ENCODE measurements at regions of chr1 and their contacts with region 1.

Region 1: DNA sequence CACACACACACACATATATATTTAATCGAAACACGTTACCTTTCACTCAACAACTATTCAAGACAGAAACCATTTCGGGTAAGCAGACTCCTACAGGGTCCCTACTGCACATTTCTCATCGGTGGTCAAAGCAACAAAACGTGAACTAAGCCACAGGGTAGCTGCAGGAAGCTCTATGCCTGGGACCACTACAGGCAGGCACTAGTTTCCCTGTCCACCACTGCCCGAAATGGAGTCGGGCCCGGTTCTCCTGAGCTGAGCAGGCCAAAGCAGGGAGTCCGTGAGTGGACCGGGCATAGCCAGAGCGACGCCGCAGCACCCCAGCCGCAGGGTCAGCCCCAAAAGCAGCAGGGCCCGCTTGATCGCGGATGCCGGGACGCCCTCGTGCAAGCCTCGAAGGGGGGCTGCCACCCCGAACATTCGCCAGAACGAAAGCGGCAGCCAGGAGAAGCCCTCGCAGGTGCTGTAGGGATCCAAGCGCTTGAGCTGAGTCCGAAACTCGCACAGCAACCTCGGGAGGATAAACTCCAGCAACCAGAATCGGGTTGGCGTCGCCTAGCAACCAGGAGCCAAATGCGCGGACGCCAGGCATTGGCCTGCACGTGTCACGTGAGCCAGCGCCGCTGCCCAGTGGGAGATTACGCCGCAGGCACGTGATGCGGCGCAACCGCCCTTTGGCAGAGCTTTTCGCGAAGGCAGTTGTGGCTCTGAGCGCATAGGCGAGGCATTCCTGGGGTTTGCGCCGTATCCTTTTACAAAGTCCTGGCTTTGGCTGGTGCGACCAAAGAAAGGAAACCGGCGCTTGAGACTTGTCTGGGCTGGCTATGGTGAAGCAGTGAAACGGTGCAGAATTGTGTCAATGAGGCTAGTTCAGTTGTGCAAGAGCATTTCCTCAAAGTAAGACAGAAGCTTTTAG is 13.9 kb upstream of the DDI2 start:
- DNase-seq: peak; percentile 92
- ATAC-seq: peak; percentile 97
- H3K4me3 ChIP-seq: peak overlapping the region; percentile 50
- H3K27ac ChIP-seq: peak overlapping the region; percentile 36
- H3K4me1 ChIP-seq: no peaks in the 10 kb centered on the region
- H3K27me3 ChIP-seq: no peaks in the 10 kb centered on the region
- CTCF ChIP-seq: no peak
- POLR2A ChIP-seq: no peak
- RAD21 ChIP-seq: no peak

Region 2: DNA sequence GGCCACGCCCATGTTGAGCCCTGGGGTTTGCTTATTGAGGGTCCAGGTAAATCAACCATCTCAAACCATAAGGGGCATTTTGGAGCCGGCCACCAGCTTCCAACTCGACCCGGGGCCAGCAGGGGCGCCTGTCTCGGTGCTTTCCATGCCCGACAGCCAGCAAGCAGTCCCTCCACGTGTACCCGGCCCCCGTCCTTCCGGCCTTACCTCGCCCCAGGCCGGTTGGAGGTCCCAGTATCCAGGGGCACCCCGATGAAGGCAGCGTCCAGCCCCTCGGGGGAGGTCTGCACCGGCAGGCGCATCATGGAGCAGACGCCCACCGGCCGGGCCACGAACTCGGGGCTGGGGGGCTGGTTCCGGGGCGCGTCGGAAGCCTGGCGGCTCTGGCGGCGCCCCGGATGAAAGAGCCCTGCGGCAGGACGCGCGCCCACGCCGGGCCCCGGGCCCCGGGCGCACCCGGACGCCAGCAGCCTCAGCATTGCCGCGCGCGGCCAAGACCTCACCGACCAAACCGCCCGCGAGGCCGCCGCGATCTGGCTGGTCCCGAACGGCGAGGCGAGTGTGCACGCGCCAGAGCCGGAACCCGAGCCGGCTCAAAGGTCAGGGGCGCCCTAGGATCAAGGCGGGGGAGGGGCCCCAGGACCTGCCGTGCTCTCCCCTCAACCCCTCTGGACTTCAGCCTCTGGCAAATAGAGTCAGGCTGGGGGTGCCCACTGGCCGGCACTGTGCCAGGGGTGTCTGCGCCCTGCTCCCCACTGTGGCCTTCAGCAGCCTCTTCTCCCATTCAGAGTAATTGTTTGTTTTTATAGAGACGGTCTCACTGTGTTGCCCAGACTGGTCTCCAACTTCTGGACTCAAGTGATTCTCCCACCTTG is 18.6 kb before region 1 on chr1 and contains the start of gene AGMAT:
- CTCF ChIA-PET with region 1: no interaction called
- POLR2A ChIA-PET with region 1: interaction called, 14 read pairs
- dilution Hi-C with region 1: no loop called
- in situ Hi-C with region 1: no loop called
- intact Hi-C with region 1: no loop called
- DNase-seq: no peak
- ATAC-seq: peak; percentile 69
- H3K4me3 ChIP-seq: peak within 1 kb of the TSS; percentile 4; the same call in 1 of the 2 replicates
- H3K27ac ChIP-seq: no peak within 1 kb of the TSS
- H3K4me1 ChIP-seq: no peaks in the 10 kb centered on the region
- H3K27me3 ChIP-seq: no peaks in the 10 kb centered on the region; the same call in 1 of the 2 replicates
- CTCF ChIP-seq: 0 out of 2 replicates have a peak, but pooled peaks have one; percentile 19
- POLR2A ChIP-seq: no peak
- RAD21 ChIP-seq: no peak
- total RNA-seq, gene AGMAT: 0.18 and 0.28 TPM in 2 replicates

Region 3: DNA sequence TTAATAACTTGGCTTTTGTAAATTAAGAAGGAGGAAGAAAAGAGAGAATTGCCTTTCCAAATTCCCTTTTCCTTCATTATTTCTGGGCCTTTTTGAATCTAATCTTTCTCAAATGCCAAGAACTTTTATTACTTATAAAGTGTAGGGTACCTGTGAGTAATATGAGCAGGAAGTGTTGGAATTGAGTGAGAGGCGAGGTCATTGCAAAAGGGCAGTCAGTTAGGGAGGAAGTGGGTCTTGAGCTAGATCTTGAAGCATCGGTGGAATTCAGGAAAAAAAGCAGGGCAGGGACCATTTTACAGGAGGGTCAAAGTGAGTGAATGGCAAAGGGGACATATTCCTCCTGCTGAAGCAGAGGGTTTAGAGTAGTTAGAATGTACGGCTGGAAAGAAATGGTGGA is 37.4 kb after region 1 on chr1:
- CTCF ChIA-PET with region 1: no interaction called
- POLR2A ChIA-PET with region 1: no interaction called
- dilution Hi-C with region 1: no loop called
- in situ Hi-C with region 1: no loop called
- intact Hi-C with region 1: no loop called
- DNase-seq: no peak
- ATAC-seq: no peak
- H3K4me3 ChIP-seq: no peak overlapping the region
- H3K27ac ChIP-seq: no peak overlapping the region
- H3K4me1 ChIP-seq: no peaks in the 10 kb centered on the region
- H3K27me3 ChIP-seq: no peaks in the 10 kb centered on the region
- CTCF ChIP-seq: no peak
- POLR2A ChIP-seq: no peak
- RAD21 ChIP-seq: no peak

Region 4: DNA sequence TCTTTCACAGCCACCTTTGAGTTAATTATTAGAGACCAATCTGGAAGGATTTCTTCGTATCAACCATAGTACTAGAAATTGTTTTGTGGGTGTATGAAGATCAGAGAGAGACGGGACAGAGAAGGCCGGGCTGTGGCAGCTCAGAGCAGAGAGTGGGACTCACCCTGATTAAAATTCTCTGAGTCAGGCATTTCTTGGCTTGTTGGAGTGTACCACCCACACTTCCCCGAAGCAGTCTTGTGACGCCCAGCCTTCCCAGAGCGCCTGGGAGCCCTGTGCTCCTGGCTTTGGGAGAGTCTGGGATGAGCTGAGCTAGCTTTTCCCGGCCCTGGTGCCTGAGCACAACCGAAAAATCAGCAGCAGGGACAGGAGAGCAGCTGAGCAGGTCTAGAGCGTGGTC is 100.3 kb after region 1 on chr1:
- CTCF ChIA-PET with region 1: no interaction called
- POLR2A ChIA-PET with region 1: no interaction called
- dilution Hi-C with region 1: no loop called
- in situ Hi-C with region 1: no loop called
- intact Hi-C with region 1: loop called (anchors 5 kb)
- DNase-seq: peak; percentile 91
- ATAC-seq: peak; percentile 97
- H3K4me3 ChIP-seq: no peak overlapping the region
- H3K27ac ChIP-seq: peak overlapping the region; percentile 76
- H3K4me1 ChIP-seq: peaks cover 16% of the 10 kb centered on the region; the same call in 1 of the 2 replicates
- H3K27me3 ChIP-seq: no peaks in the 10 kb centered on the region
- CTCF ChIP-seq: no peak
- POLR2A ChIP-seq: peak; percentile 38; the same call in 1 of the 2 replicates
- RAD21 ChIP-seq: peak; percentile 2; the same call in 1 of the 2 replicates

Region 5: GRCh38 chr1:15724923-15725880 is 121.9 kb after region 1 on chr1:
- CTCF ChIA-PET with region 1: no interaction called
- POLR2A ChIA-PET with region 1: no interaction called
- dilution Hi-C with region 1: no loop called
- in situ Hi-C with region 1: no loop called
- intact Hi-C with region 1: no loop called
- DNase-seq: no peak
- ATAC-seq: no peak
- H3K4me3 ChIP-seq: no peak overlapping the region
- H3K27ac ChIP-seq: no peak overlapping the region
- H3K4me1 ChIP-seq: no peaks in the 10 kb centered on the region
- H3K27me3 ChIP-seq: no peaks in the 10 kb centered on the region
- CTCF ChIP-seq: no peak
- POLR2A ChIP-seq: no peak
- RAD21 ChIP-seq: no peak

Region 6: DNA sequence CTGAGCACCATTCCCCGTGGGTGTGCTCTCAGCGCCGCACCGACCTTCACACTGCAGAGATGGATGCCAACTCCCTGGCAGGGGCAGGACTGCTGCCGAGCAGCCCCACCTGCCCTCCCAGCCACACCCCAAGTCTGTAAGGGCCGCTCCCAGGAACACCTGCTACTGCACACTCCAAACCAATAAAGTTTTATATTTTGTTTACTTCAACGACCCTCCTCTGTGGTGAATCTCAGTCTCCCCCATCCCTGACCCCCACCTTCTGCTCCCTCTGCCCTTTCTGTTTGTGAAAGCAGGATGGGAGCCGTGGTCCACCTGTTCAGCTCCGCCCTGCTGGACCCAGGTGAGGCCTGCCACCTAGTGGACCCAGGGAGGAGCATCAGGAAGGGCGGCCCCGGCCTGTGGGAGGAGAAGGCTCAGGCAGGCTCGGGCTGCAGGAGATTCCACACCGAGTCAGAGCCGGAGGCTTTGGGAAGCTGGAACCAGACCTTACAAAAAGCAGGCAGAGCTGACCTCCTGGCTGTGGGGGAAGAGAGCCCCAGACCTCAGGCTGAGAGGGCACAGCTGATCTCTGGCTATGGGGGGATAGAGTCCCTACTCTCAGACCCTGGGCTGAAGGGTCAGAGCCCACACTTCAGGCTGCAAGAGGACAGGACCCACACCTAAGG is 138.0 kb after region 1 on chr1:
- CTCF ChIA-PET with region 1: no interaction called
- POLR2A ChIA-PET with region 1: no interaction called
- dilution Hi-C with region 1: no loop called
- in situ Hi-C with region 1: loop called (anchors 5 kb)
- intact Hi-C with region 1: no loop called
- DNase-seq: peak; percentile 44
- ATAC-seq: peak; percentile 87
- H3K4me3 ChIP-seq: no peak overlapping the region
- H3K27ac ChIP-seq: no peak overlapping the region
- H3K4me1 ChIP-seq: no peaks in the 10 kb centered on the region
- H3K27me3 ChIP-seq: no peaks in the 10 kb centered on the region
- CTCF ChIP-seq: peak; percentile 78
- POLR2A ChIP-seq: no peak
- RAD21 ChIP-seq: peak; percentile 85

Region 7: GRCh38 chr1:15848957-15849774 is 245.9 kb after region 1 on chr1:
- CTCF ChIA-PET with region 1: no interaction called
- POLR2A ChIA-PET with region 1: no interaction called
- dilution Hi-C with region 1: no loop called
- in situ Hi-C with region 1: no loop called
- intact Hi-C with region 1: no loop called
- DNase-seq: peak; percentile 82
- ATAC-seq: peak; percentile 3
- H3K4me3 ChIP-seq: peak overlapping the region; percentile 94
- H3K27ac ChIP-seq: peak overlapping the region; percentile 88
- H3K4me1 ChIP-seq: no peaks in the 10 kb centered on the region
- H3K27me3 ChIP-seq: no peaks in the 10 kb centered on the region
- CTCF ChIP-seq: no peak
- POLR2A ChIP-seq: peak; percentile 83
- RAD21 ChIP-seq: no peak